ENCODE measurements at regions of chr22 and their contacts with region 1.

Region 1: GRCh38 chr22:50305923-50306566 is 1.4 kb downstream of the PLXNB2 start:
- DNase-seq: peak; percentile 95 to 96
- ATAC-seq: peak; percentile 65
- H3K4me3 ChIP-seq: peak overlapping the region; percentile 68 to 84
- H3K27ac ChIP-seq: peak overlapping the region; percentile 16 to 54
- H3K4me1 ChIP-seq: peaks cover 0 to 5% of the 10 kb centered on the region in 2 donors
- H3K27me3 ChIP-seq: no peaks in the 10 kb centered on the region

Region 2: DNA sequence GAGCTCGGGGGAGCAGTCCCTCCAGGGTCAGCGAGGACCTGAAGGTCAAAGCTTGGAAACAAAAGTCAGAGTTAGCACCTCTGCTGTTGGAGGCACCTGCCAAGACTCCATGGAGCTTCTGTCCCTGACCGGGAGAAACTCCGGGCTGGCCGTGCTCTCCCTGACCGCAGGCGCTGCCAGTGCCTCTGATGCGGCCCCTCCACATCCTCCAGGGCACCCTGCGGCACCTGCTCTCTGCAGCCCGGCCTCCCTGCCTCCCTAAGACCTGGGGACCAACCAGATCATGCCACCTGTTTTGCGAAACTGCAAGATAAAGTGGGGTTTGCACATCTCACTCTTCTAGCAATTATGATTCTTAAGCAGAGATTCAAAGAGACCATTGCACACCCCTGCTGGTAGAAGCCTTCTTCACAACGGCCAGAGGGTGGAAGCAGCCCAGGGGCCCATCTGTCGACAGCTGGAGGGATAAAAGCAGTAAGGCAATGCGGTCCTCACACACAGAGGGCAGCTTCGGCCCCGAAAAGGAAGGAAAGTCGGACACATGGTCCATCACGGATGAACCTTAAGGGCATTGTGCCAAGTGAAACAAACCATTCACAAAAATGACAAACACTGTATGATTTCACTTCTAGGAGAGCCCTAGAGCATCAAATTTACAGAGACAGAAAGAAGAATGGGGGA is 955.5 kb before region 1 on chr22:
- intact Hi-C with region 1: no loop called
- DNase-seq: no peak
- ATAC-seq: no peak
- H3K4me3 ChIP-seq: no peak overlapping the region
- H3K27ac ChIP-seq: no peak overlapping the region
- H3K4me1 ChIP-seq: no peaks in the 10 kb centered on the region
- H3K27me3 ChIP-seq: no peaks in the 10 kb centered on the region

Region 3: GRCh38 chr22:50276143-50276542 is 29.9 kb before region 1 on chr22:
- intact Hi-C with region 1: no loop called
- DNase-seq: peak; percentile 81 to 88
- ATAC-seq: peak; percentile 80
- H3K4me3 ChIP-seq: no peak overlapping the region
- H3K27ac ChIP-seq: no peak overlapping the region
- H3K4me1 ChIP-seq: no peaks in the 10 kb centered on the region
- H3K27me3 ChIP-seq: no peaks in the 10 kb centered on the region

Region 4: DNA sequence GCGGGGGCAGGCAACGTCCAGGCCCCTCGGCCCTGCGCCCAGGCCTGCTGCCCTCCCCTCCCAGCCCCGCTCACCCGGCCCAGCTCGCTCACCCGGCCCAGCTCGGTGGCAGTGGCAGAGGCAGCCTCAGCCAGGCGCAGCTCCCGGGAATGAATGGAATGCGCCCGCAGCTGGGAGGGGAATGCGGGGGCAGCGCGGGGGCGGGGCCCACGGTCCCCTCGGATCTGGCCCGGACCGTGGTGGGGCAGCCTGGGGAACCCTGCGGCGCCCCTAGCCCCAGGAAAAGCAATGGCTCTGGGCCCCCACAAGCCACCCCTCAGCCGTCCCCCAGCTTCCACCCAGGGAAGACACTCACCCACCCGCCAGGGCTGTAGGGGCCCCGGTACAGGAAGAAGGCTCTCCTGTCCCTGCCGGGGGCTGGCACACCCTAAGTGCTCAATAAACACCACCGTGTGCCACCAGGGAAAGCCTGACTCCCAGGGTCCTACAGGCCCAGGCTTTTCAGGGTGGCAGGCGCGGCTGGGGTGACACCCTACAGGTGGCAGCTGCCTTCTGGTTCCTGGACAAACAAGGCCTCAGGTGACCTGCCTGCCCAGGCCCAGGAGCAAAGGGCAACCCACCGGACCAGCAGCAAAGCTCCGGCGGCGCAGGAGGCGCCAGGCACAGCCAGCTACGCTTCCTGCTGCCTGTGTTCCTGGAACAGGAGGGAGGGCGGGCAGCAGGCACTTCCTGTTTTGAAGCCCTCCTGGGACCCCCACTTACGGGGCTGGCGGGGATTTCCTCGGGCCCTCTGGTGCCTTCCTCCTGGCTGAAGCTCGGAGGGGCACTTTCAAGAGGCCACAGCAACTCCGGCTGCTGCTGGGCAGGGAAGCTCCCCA is 12.4 kb before region 1 on chr22:
- intact Hi-C with region 1: loop called in 1 of 2 experiments (anchors 1 kb)
- DNase-seq: peak; percentile 87 to 93
- ATAC-seq: peak; percentile 85
- H3K4me3 ChIP-seq: no peak overlapping the region
- H3K27ac ChIP-seq: peak overlapping the region; percentile 1 to 90
- H3K4me1 ChIP-seq: no peaks in the 10 kb centered on the region
- H3K27me3 ChIP-seq: no peaks in the 10 kb centered on the region

Measured in aorta (tissue), 5 donors.